PC-9 (cell line): ENCODE measurements at regions of chr3 and their contacts with region 1.

Region 1: GRCh38 chr3:189458532-189458931 is 172.7 kb upstream of the TP63 start:
- DNase-seq: peak; percentile 84 to 86
- H3K4me3 ChIP-seq: no peak overlapping the region
- H3K27ac ChIP-seq: no peak overlapping the region
- H3K4me1 ChIP-seq: peaks cover 11% of the 10 kb centered on the region
- H3K27me3 ChIP-seq: no peaks in the 10 kb centered on the region
- CTCF ChIP-seq: no peak

Region 2: GRCh38 chr3:189304446-189305351 is 153.8 kb before region 1 on chr3:
- CTCF ChIA-PET with region 1: no interaction called
- POLR2A ChIA-PET with region 1: no interaction called
- intact Hi-C with region 1: loop called (anchors 1 kb)
- DNase-seq: peak; percentile 93 to 99
- H3K4me3 ChIP-seq: peak overlapping the region; percentile 27; the same call in 1 of the 2 replicates
- H3K27ac ChIP-seq: peak overlapping the region; percentile 85
- H3K4me1 ChIP-seq: peaks cover 44% of the 10 kb centered on the region
- H3K27me3 ChIP-seq: no peaks in the 10 kb centered on the region
- CTCF ChIP-seq: no peak

Region 3: GRCh38 chr3:189490749-189491148 is 32.2 kb after region 1 on chr3:
- CTCF ChIA-PET with region 1: interaction called, 3 read pairs
- POLR2A ChIA-PET with region 1: no interaction called
- intact Hi-C with region 1: loop called (anchors 1 kb)
- DNase-seq: peak in 1 of 2 experiments; percentile 24
- H3K4me3 ChIP-seq: no peak overlapping the region
- H3K27ac ChIP-seq: peak overlapping the region; percentile 8; the same call in 1 of the 2 replicates
- H3K4me1 ChIP-seq: peaks cover 12% of the 10 kb centered on the region
- H3K27me3 ChIP-seq: no peaks in the 10 kb centered on the region
- CTCF ChIP-seq: no peak

Region 4: DNA sequence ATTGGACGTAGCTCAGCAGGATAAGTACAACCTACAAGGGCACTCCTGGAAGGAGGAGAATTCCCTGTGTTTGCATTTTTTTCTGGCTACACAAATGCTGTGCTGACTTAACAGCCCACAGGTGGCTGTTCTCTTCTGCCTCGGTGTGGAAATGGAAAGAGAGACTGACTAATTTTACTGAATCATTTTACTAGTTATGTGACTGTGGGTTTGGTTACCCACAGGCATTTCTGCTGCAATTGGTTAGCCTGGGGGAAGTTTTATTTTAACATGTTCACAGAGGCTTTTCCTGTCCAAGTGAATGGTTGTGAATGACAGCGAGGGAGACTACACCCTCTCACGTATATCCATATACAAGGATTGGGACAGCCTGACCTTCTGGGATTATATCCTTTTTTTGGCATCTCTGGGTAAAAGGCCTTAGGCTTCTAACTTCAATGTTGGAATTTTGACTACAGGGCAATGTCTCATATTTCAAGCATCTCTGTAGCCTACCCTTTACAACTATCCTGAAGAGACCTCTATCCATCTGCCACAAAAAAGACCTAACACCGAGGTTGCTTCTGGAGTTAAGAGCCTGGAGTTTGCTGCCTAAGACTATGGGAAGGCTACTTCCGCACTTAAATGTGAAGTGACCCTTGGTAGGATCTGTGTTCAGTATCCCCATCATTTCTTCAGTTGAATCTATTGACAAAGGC is 105.5 kb after region 1 on chr3:
- CTCF ChIA-PET with region 1: no interaction called
- POLR2A ChIA-PET with region 1: no interaction called
- intact Hi-C with region 1: loop called (anchors 1 kb)
- DNase-seq: peak; percentile 68 to 92
- H3K4me3 ChIP-seq: no peak overlapping the region
- H3K27ac ChIP-seq: peak overlapping the region; percentile 78
- H3K4me1 ChIP-seq: peaks cover 27% of the 10 kb centered on the region
- H3K27me3 ChIP-seq: no peaks in the 10 kb centered on the region
- CTCF ChIP-seq: no peak

Region 5: GRCh38 chr3:189766437-189766836 is 307.9 kb after region 1 on chr3:
- CTCF ChIA-PET with region 1: no interaction called
- POLR2A ChIA-PET with region 1: no interaction called
- intact Hi-C with region 1: loop called (anchors 1 kb)
- DNase-seq: peak; percentile 63 to 93
- H3K4me3 ChIP-seq: peak overlapping the region; percentile 38
- H3K27ac ChIP-seq: peak overlapping the region; percentile 90
- H3K4me1 ChIP-seq: peaks cover 35% of the 10 kb centered on the region
- H3K27me3 ChIP-seq: no peaks in the 10 kb centered on the region
- CTCF ChIP-seq: no peak